Mammary epithelial cell (primary cell): ENCODE measurements at regions of chr16 and their contacts with region 1.

Region 1: DNA sequence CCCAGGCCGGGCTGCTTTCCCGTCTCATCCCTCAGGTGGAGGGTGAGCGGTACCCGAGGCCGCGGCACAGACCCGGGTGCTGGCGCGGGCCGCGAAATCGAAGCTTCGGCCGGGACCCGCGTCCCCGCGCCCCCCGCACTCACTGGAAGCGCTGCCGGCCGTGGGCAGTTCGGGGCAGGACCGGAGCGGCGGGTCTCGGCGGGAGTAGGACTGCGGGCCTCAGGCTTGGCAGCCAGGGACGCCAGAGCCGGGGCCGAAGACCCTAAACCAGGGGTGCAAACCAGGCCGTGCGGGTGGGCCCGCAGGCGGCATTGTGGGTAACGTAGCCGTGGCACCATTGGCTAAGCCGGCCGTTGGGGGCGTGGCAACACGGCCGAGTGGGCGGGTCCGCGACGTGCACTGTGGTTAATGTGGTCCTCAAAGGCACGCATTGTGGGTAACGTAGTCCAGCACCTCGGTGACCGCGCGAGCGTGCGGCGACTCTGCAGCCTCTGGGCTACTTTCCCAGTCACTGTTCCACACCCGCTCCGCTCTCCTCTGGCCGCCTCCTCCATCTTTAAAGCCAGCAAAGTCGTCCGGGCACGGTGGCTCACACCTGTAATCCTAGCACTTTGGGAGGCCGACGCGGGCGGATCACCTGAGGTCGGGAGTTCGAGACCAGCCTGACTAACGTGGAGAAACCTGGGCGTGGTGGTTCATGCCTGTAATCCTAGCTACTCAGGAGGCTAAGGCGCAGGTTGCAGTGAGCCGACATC is at the start of gene ZNF500:
- DNase-seq: peak; percentile 91
- H3K4me3 ChIP-seq: peak within 1 kb of the TSS; percentile 73 to 89 (median 78)
- H3K27ac ChIP-seq: peak within 1 kb of the TSS; percentile 88
- H3K4me1 ChIP-seq: peaks cover 14% of the 10 kb centered on the region
- H3K27me3 ChIP-seq: no peaks in the 10 kb centered on the region
- CTCF ChIP-seq: no peak
- total RNA-seq, gene ZNF500: 13.0 to 14.2 TPM

Region 2: GRCh38 chr16:4700380-4700996 is 66.6 kb before region 1 on chr16:
- CTCF ChIA-PET with region 1: no interaction called
- dilution Hi-C with region 1: loop called (anchors 5 kb)
- in situ Hi-C with region 1: no loop called
- intact Hi-C with region 1: no loop called
- DNase-seq: peak; percentile 73
- H3K4me3 ChIP-seq: no peak overlapping the region
- H3K27ac ChIP-seq: no peak overlapping the region
- H3K4me1 ChIP-seq: no peaks in the 10 kb centered on the region
- H3K27me3 ChIP-seq: no peaks in the 10 kb centered on the region
- CTCF ChIP-seq: no peak

Region 3: DNA sequence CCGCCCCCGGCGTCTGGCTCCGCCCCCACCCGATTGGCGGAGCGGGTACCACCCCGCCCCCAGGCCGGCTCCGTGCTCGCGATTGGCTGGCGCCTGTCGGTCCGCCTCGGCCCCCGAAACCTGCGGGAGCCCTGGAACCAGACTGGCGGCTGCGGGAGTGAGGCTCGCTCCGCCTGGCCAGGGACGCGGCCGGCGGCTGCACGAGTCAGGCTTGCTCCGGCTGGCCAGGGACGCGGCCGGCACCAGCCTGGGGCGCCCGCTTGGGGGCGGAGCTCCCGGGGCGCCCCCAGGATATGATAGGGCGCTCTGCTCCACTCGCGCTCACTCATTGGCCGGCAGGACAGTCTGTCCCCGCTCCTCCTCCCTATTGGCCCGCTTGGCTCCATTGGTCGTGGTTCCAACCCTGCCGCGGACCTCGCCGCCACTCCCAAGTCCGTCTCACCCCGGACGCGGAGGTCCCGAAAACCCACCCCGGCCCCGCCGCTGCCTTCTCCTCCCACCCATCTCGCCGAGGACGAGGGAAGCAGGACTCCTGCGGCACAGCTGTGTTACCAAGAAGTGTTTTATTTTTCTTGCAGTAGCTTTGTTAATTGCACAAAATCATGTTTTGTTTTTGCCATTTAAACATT is 35.7 kb after region 1 on chr16:
- CTCF ChIA-PET with region 1: no interaction called
- dilution Hi-C with region 1: no loop called
- in situ Hi-C with region 1: no loop called
- intact Hi-C with region 1: loop called (anchors 1 kb)
- DNase-seq: peak; percentile 90
- H3K4me3 ChIP-seq: peak overlapping the region; percentile 73 to 80 (median 77)
- H3K27ac ChIP-seq: peak overlapping the region; percentile 53
- H3K4me1 ChIP-seq: peaks cover 26% of the 10 kb centered on the region
- H3K27me3 ChIP-seq: no peaks in the 10 kb centered on the region
- CTCF ChIP-seq: no peak

Region 4: DNA sequence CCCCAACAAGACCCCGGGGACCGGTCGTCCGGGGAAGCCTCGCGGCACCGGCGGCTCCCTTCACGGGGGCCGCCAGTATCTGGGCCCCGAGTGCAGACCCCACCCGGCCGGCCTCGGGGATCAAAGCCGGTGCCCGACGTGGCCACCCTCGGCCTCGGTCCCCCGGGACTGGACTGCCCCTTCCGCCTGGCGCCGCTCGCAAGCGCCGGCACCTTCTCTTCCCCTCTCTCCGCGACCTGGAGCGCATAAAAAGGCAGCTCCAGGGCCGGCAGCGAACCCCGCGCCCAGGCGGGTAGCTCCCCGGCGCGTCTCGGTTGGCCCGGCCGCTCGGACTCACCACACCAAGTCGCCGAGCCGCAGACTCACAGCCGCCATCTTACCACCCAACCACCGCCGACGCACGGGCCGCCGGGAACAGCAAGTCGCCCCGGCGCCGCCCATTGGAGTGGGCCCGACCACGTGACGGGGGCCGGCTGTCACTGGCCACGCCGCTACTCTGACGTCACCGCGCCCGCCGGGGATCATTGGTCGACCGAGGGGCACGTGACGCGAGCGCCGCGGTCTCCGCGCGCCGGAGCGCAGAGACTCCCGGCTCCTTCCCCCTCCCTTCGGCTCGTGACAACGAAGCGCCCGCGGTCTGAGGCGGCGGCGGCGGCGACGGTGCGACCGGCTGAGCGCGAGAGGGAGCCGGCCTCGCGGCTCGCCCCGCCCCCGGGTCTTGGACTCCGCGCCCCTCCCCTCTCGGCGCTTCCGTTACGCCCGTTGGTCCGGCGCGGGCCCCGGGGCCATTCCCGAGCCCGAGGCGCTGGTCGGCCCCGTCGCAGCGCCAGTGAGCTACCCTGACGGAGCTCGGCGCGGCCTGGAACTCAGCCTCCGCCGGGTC is 80.1 kb after region 1 on chr16 and contains the starts of genes GLYR1 and UBN1:
- CTCF ChIA-PET with region 1: no interaction called
- dilution Hi-C with region 1: no loop called
- in situ Hi-C with region 1: no loop called
- intact Hi-C with region 1: loop called (anchors 1 kb)
- DNase-seq: peak; percentile 97
- H3K4me3 ChIP-seq: peak within 1 kb of the TSS; percentile 65 to 93 (median 89)
- H3K27ac ChIP-seq: peak within 1 kb of the TSS; percentile 83
- H3K4me1 ChIP-seq: peaks cover 34% of the 10 kb centered on the region
- H3K27me3 ChIP-seq: no peaks in the 10 kb centered on the region
- CTCF ChIP-seq: peak in 1 of 2 donors; percentile 1
- total RNA-seq, gene GLYR1: 38.0 to 67.7 TPM
- total RNA-seq, gene UBN1: 23.7 to 37.2 TPM

Region 5: GRCh38 chr16:4882633-4883285 is 115.7 kb after region 1 on chr16:
- CTCF ChIA-PET with region 1: no interaction called
- dilution Hi-C with region 1: no loop called
- in situ Hi-C with region 1: no loop called
- intact Hi-C with region 1: no loop called
- DNase-seq: peak; percentile 93
- H3K4me3 ChIP-seq: no peak overlapping the region
- H3K27ac ChIP-seq: no peak overlapping the region
- H3K4me1 ChIP-seq: peaks cover 14% of the 10 kb centered on the region
- H3K27me3 ChIP-seq: no peaks in the 10 kb centered on the region
- CTCF ChIP-seq: no peak

Region 6: GRCh38 chr16:4944333-4945281 is 177.6 kb after region 1 on chr16:
- CTCF ChIA-PET with region 1: interaction called, 9 read pairs
- dilution Hi-C with region 1: no loop called
- in situ Hi-C with region 1: no loop called
- intact Hi-C with region 1: loop called (anchors 5 kb)
- DNase-seq: peak; percentile 95
- H3K4me3 ChIP-seq: no peak overlapping the region
- H3K27ac ChIP-seq: peak overlapping the region; percentile 81
- H3K4me1 ChIP-seq: peaks cover 38% of the 10 kb centered on the region
- H3K27me3 ChIP-seq: no peaks in the 10 kb centered on the region
- CTCF ChIP-seq: no peak